ENCODE measurements at regions of chr3 and their contacts with region 1.

Region 1: DNA sequence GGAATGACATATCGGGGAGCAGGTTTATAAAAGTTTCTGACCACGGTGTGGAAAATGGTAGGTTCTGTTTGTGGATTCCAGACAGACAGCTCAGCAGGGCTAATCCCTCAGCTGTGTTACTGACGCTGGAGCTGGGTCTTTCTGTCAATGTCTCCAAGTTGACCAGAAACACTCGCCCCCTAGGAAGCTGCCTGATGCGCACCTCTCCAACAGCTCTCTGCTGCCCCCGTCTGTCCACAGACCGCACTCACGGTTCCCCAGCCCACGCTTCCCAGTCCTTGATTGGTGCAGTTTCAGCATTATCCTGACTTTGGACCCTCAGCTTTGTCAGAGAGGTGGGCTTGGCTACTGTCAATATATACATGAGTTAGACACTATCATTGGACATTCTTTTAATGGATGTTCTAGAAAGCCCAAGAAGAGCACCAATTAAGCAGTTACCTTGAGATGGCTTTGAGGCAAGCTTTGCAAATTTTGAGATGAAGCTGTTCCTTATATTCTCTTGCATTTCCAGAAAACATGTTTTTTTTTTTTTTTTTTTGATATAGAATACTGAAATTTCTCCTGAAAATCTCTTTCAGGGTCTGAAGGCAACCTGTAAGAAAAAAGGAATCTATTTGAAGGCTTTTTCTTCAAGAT is 98.9 kb upstream of the TBC1D5 start:
- DNase-seq: peak; percentile 23
- H3K4me3 ChIP-seq: no peak overlapping the region
- H3K27ac ChIP-seq: no peak overlapping the region
- H3K4me1 ChIP-seq: no peaks in the 10 kb centered on the region
- H3K27me3 ChIP-seq: no peaks in the 10 kb centered on the region
- CTCF ChIP-seq: peak; percentile 98

Region 2: DNA sequence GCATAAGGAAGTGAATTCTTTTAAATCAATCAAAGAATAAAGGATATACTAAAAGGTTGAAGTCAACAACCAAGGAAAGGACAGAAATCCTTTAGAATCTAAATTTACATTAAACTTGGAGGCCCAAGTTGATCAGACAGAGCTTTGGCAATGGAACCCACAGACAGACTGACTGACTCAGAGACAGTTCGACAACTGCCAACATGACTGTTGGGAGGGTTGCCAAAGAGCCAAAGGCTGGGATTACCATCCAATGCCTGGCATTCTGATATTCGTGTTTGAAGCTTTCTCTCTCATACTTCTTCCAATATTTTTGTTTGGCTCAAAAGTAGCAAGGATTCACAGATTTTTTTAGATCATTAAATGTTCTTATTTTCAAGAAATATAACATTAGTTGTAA is 550.4 kb before region 1 on chr3:
- CTCF ChIA-PET with region 1: no interaction called
- dilution Hi-C with region 1: no loop called
- in situ Hi-C with region 1: loop called in 1 of 2 experiments (anchors 25 kb)
- intact Hi-C with region 1: no loop called
- DNase-seq: peak; percentile 54
- H3K4me3 ChIP-seq: no peak overlapping the region
- H3K27ac ChIP-seq: no peak overlapping the region
- H3K4me1 ChIP-seq: no peaks in the 10 kb centered on the region
- H3K27me3 ChIP-seq: no peaks in the 10 kb centered on the region
- CTCF ChIP-seq: no peak

Region 3: GRCh38 chr3:17473761-17474160 is 367.5 kb before region 1 on chr3:
- CTCF ChIA-PET with region 1: interaction called, 3 read pairs
- dilution Hi-C with region 1: no loop called
- in situ Hi-C with region 1: no loop called
- intact Hi-C with region 1: loop called (anchors 1 kb)
- DNase-seq: no peak
- H3K4me3 ChIP-seq: no peak overlapping the region
- H3K27ac ChIP-seq: no peak overlapping the region
- H3K4me1 ChIP-seq: no peaks in the 10 kb centered on the region
- H3K27me3 ChIP-seq: no peaks in the 10 kb centered on the region
- CTCF ChIP-seq: peak; percentile 19 to 32

Region 4: GRCh38 chr3:17645072-17645698 is 196.1 kb before region 1 on chr3:
- CTCF ChIA-PET with region 1: interaction called, 9 read pairs
- dilution Hi-C with region 1: no loop called
- in situ Hi-C with region 1: loop called in 1 of 2 experiments (anchors 25 kb)
- intact Hi-C with region 1: loop called (anchors 2 kb)
- DNase-seq: peak; percentile 55
- H3K4me3 ChIP-seq: no peak overlapping the region
- H3K27ac ChIP-seq: no peak overlapping the region
- H3K4me1 ChIP-seq: peaks cover 2% of the 10 kb centered on the region
- H3K27me3 ChIP-seq: no peaks in the 10 kb centered on the region
- CTCF ChIP-seq: peak; percentile 72 to 78

Region 5: GRCh38 chr3:19757773-19758172 is 1916.5 kb after region 1 on chr3:
- CTCF ChIA-PET with region 1: no interaction called
- dilution Hi-C with region 1: no loop called
- in situ Hi-C with region 1: no loop called
- intact Hi-C with region 1: no loop called
- DNase-seq: no peak
- H3K4me3 ChIP-seq: no peak overlapping the region
- H3K27ac ChIP-seq: no peak overlapping the region
- H3K4me1 ChIP-seq: no peaks in the 10 kb centered on the region
- H3K27me3 ChIP-seq: no peaks in the 10 kb centered on the region
- CTCF ChIP-seq: no peak

Measured in mammary epithelial cell (primary cell).